ENCODE measurements at regions of chr11 and their contacts with region 1.

Region 1: DNA sequence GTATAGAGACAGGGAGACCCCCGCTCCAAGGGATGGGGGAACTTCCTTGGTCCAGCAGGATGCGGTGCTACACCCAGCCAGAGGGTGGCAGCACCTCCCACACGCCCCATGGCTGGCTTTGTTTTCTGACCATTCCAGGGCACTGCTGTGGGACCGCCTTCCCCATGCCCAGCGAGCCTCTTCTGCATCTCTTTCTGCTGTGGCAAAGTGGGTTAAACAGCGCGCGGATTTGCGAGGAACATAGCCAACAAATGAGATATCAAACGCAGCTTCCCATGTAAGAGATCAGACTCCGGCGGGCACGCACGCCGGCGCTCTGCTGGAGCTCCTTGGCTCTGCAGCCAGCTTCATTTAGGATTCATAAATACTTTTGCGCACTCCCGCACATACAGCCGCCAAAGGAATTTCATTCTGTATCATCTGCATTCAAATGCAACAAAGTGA is 485.8 kb upstream of the CADM1 start:
- DNase-seq: peak; percentile 16 to 27
- ATAC-seq: peak in 6 of 8 donors; percentile 29 to 72 (median 62)
- H3K4me3 ChIP-seq: peak overlapping the region in 4 of 10 donors; percentile 1 to 33 (median 20)
- H3K27ac ChIP-seq: no peak overlapping the region
- H3K4me1 ChIP-seq: peaks cover 0 to 4% (median 0%) of the 10 kb centered on the region in 9 donors
- H3K27me3 ChIP-seq: peaks cover 0 to 4% (median 0%) of the 10 kb centered on the region in 7 donors
- CTCF ChIP-seq: peak; percentile 55 to 85 (median 76)

Region 2: GRCh38 chr11:116217006-116217405 is 227.0 kb after region 1 on chr11:
- intact Hi-C with region 1: loop called in 6 of 10 experiments (anchors 2 to 10 kb)
- DNase-seq: peak; percentile 21 to 35
- ATAC-seq: peak in 3 of 8 donors; percentile 35 to 71 (median 55)
- H3K4me3 ChIP-seq: no peak overlapping the region
- H3K27ac ChIP-seq: no peak overlapping the region
- H3K4me1 ChIP-seq: peaks cover 0 to 7% (median 0%) of the 10 kb centered on the region in 9 donors
- H3K27me3 ChIP-seq: peaks cover 0 to 3% (median 0%) of the 10 kb centered on the region in 7 donors
- CTCF ChIP-seq: peak; percentile 32 to 80 (median 60)

Region 3: GRCh38 chr11:116224154-116224888 is 234.3 kb after region 1 on chr11:
- intact Hi-C with region 1: loop called in 6 of 10 experiments (anchors 2 to 10 kb)
- DNase-seq: peak in 1 of 2 donors; percentile 46
- ATAC-seq: peak in 3 of 8 donors; percentile 24 to 61 (median 51)
- H3K4me3 ChIP-seq: no peak overlapping the region
- H3K27ac ChIP-seq: no peak overlapping the region
- H3K4me1 ChIP-seq: peaks cover 0 to 10% (median 0%) of the 10 kb centered on the region in 9 donors
- H3K27me3 ChIP-seq: peaks cover 0 to 20% (median 4%) of the 10 kb centered on the region in 7 donors
- CTCF ChIP-seq: peak; percentile 41 to 77 (median 67)

Region 4: DNA sequence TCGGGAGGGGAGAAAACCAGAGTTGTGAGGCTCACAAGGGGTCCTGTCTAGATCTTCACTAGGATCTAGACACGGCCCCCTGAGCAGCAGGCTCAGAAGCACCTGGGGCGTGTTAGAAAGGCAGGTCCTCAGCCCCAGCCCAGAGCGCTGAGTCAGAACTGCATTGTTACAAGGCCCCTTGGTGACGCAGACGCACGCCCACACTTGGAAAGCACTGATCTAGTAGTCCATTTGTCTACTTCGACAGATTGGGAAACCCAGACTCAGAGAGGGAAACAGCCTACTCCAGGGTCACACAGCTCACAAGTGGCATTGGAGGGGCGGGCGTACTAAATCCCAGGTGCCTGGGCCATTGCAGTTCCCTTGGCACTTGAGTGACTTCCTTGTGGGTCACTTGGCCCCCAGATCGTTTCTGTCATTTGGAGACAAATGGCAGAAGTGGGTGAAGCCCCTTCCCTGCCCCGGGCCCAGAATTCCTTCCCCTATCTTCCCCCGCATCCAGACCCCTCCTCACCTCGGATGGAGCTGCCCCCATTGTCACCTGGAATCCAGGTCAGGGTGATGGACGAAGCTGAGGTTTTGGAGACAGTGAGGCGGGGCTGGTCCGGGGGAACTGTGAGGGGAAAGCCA is 1448.5 kb after region 1 on chr11:
- intact Hi-C with region 1: loop called in 1 of 10 experiments (anchors 5 kb)
- DNase-seq: no peak
- ATAC-seq: no peak
- H3K4me3 ChIP-seq: no peak overlapping the region
- H3K27ac ChIP-seq: no peak overlapping the region
- H3K4me1 ChIP-seq: peaks cover 0 to 2% (median 0%) of the 10 kb centered on the region in 9 donors
- H3K27me3 ChIP-seq: peaks cover 0 to 12% (median 0%) of the 10 kb centered on the region in 7 donors
- CTCF ChIP-seq: no peak

Measured in heart right ventricle (tissue), 16 donors.